Posterior vena cava (tissue), 2 donors: ENCODE measurements at regions of chr12 and their contacts with region 1.

Region 1: DNA sequence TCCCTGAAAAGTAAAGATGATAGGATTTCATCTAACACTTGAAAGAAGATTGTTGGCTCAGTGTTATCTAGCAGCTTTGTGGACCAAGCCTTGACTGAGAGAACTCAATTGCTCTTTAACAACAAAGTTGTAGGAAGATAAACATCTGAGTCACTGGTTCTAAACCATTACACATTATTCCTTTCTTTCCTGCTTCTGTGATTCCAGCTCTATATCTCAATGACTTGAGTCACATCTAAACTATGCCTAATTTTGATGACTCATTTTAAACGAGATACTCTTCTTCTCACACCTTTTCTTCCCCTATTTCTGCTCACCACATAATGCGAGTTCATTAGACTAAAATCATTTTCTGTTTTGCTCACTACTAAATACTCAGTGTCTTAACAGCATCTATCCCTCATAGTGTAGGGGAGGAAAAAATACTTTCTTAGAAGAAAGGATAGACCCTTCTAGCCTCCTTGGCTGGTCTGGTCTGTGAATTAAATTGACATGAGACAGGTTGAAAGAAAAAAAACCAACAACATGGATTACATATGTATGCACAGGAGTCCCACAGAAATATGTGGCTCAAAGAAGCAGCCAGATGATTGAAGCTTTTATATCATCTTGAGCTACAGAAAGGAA is 201.4 kb downstream of the C12orf50 start:
- DNase-seq: no peak

Region 2: GRCh38 chr12:87848248-87848868 is 20.6 kb after region 1 on chr12:
- intact Hi-C with region 1: loop called in 1 of 2 experiments (anchors 2 kb)
- DNase-seq: no peak